ENCODE measurements at regions of chr3 and their contacts with region 1.

Region 1: DNA sequence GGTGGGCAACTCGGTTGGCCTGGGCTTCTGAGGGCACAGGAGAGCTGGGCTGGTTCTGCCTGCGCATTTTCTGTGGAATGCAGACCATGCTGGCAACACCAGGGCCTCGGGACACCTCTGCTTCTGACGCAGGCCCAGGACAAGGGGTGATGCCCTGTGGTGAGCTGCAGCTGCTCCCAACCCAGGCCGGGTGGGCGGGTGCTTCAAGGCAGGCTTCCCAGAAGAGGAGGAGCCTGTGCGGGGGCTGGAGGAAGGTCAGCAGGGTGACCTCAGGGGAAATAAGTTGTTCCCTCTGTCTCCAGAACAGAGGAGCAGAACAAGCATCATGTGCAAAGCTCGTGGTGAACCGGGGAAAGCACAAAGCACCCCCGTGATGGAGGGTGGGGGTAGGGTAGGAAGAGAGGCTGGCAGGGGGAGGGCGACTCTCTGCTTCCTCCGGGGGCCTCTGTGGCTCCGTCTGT is 11.0 kb upstream of the PLXNA1 start:
- DNase-seq: peak; percentile 38
- ATAC-seq: peak; percentile 74
- H3K4me3 Mint-ChIP-seq: no peak overlapping the region
- H3K27ac Mint-ChIP-seq: no peak overlapping the region
- H3K4me1 Mint-ChIP-seq: peaks cover 13% of the 10 kb centered on the region
- H3K27me3 Mint-ChIP-seq: peaks cover 5% of the 10 kb centered on the region
- CTCF ChIP-seq: no peak

Region 2: GRCh38 chr3:126982471-126983175 is 10.7 kb after region 1 on chr3 and contains the start of gene PLXNA1:
- CTCF ChIA-PET with region 1: interaction called, 28 read pairs
- POLR2A ChIA-PET with region 1: no interaction called
- DNase-seq: peak; percentile 79
- ATAC-seq: peak; percentile 56
- H3K4me3 Mint-ChIP-seq: peak within 1 kb of the TSS; percentile 73
- H3K27ac Mint-ChIP-seq: no peak within 1 kb of the TSS
- H3K4me1 Mint-ChIP-seq: peaks cover 9% of the 10 kb centered on the region
- H3K27me3 Mint-ChIP-seq: peaks cover 21% of the 10 kb centered on the region
- CTCF ChIP-seq: peak; percentile 94
- total RNA-seq, gene PLXNA1: 53.0 to 55.0 TPM (median 53.8 TPM) in 3 replicates

Region 3: GRCh38 chr3:127002195-127003174 is 30.6 kb after region 1 on chr3:
- CTCF ChIA-PET with region 1: interaction called, 10 read pairs
- POLR2A ChIA-PET with region 1: no interaction called
- DNase-seq: peak; percentile 91
- ATAC-seq: peak; percentile 92
- H3K4me3 Mint-ChIP-seq: no peak overlapping the region
- H3K27ac Mint-ChIP-seq: peak overlapping the region; percentile 97
- H3K4me1 Mint-ChIP-seq: peaks cover 26% of the 10 kb centered on the region
- H3K27me3 Mint-ChIP-seq: no peaks in the 10 kb centered on the region
- CTCF ChIP-seq: no peak

Measured in WTC11 (cell line).